ENCODE measurements at regions of chr3 and their contacts with region 1.

Region 1: GRCh38 chr3:155495387-155495786 is 201.9 kb upstream of the STRIT1 start:
- DNase-seq: no peak
- ATAC-seq: no peak
- H3K4me3 ChIP-seq: no peak overlapping the region
- H3K27ac ChIP-seq: no peak overlapping the region
- H3K4me1 ChIP-seq: no peaks in the 10 kb centered on the region
- H3K27me3 ChIP-seq: peaks cover 0 to 6% of the 10 kb centered on the region in 2 experiments; a peak in 1 of 5 replicates
- CTCF ChIP-seq: no peak
- EP300 ChIP-seq: no peak
- POLR2A ChIP-seq: no peak
- RAD21 ChIP-seq: no peak

Region 2: DNA sequence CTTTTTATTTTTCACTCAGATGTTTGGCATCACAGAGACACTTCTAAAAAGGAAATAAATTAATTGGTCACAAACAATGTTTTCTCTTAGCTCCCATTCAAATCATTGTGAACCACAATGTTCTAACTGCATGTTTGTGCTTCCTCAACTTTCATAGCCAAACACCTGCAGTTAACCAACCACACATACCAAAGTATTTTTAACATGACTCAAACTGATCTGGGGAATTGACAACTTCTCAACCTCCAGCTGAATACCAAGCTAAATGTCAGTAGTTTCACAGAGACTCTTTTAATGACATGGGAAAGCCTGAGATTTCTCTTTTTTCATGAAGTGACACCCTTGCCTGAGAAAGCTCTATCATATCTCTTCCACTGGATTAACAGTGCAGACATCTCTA is 633.1 kb before region 1 on chr3:
- CTCF ChIA-PET with region 1: no interaction called
- POLR2A ChIA-PET with region 1: no interaction called
- in situ Hi-C with region 1: no loop called
- intact Hi-C with region 1: loop called (anchors 5 kb)
- DNase-seq: no peak
- ATAC-seq: no peak
- H3K4me3 ChIP-seq: no peak overlapping the region
- H3K27ac ChIP-seq: no peak overlapping the region
- H3K4me1 ChIP-seq: no peaks in the 10 kb centered on the region
- H3K27me3 ChIP-seq: no peaks in the 10 kb centered on the region
- CTCF ChIP-seq: no peak
- EP300 ChIP-seq: no peak
- POLR2A ChIP-seq: no peak
- RAD21 ChIP-seq: no peak